OCI-LY7 (cell line): ENCODE measurements at regions of chr1 and their contacts with region 1.

Region 1: GRCh38 chr1:34859446-34860200 is at the start of gene SMIM12:
- DNase-seq: peak; percentile 94
- H3K4me3 ChIP-seq: peak within 1 kb of the TSS; percentile 95
- H3K27ac ChIP-seq: peak within 1 kb of the TSS; percentile 26
- H3K4me1 ChIP-seq: peaks cover 17% of the 10 kb centered on the region
- CTCF ChIP-seq: peak; percentile 87
- total RNA-seq, gene SMIM12: 36.3 and 44.3 TPM in 2 replicates

Region 2: GRCh38 chr1:34268311-34268954 is 591.2 kb before region 1 on chr1:
- CTCF ChIA-PET with region 1: no interaction called
- POLR2A ChIA-PET with region 1: no interaction called
- intact Hi-C with region 1: no loop called
- DNase-seq: no peak
- H3K4me3 ChIP-seq: no peak overlapping the region
- H3K27ac ChIP-seq: no peak overlapping the region
- H3K4me1 ChIP-seq: no peaks in the 10 kb centered on the region
- CTCF ChIP-seq: no peak

Region 3: DNA sequence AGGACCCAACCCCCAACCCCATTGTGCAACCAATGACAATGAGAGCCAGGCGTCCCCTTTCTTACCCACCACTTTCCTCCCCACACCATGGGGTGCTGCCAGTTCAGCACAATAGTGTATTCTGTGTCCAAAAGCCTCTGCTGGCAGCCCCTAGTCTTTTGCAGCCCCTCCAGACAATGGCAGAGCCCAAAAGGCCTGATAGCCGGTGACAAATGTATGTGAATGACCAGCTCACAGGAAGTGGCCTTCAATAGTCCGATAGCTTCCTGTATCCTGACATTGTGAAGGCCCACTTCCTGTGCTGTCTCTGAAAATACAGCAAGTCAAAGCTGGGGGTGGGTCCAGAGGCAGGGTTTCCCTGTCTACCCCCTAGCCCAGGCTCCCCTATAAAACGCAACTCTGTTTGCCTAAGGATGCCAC is 16.7 kb before region 1 on chr1:
- CTCF ChIA-PET with region 1: no interaction called
- POLR2A ChIA-PET with region 1: no interaction called
- intact Hi-C with region 1: no loop called
- DNase-seq: no peak
- H3K4me3 ChIP-seq: no peak overlapping the region
- H3K27ac ChIP-seq: no peak overlapping the region
- H3K4me1 ChIP-seq: no peaks in the 10 kb centered on the region
- CTCF ChIP-seq: no peak

Region 4: DNA sequence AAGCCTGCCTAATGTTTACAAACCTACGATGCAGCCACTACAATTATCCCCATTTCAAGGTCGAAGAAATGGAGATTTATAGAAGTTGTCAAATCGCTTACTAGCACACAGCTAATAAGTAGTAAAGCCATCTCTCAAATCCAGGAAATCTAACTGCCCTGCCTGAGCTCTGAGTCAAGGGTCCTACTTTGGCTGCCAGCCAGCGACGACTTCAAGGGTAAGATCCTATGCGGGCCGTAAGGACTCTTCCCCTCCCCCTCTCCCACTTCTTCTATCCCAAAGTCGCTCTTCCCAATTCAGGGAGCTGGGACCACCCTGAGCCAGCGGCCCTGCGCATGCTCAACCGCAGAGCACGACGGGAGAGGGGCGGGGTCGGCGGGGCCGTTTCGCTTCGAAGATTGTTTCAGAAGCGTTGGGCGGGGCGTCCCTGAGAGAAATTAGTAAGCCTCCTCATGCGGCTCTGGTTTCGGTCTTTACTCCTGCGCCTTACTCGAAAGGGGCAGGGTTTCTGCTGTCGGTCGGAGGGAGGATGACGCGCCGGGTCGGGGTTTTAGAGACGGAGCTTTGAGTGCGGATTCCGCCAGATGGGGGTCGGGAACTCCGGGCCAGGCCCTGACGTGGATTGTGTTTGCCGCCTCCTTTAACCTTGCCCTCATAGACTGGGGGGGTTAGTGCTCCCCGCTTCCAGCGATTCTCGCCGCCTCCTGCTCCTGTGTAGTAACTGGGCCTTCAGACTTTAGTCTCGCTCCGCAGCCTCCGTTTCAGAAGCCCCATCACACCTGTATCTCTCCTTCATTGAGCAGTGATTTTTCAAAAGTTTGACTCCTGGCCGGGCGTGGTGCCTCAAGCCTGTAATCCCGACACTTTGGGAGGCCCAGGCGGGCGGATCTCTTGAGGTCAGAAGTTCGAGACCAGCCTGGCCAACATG is 219.6 kb after region 1 on chr1 and contains the start of gene ZMYM1:
- CTCF ChIA-PET with region 1: no interaction called
- POLR2A ChIA-PET with region 1: no interaction called
- intact Hi-C with region 1: loop called (anchors 2 kb)
- DNase-seq: peak; percentile 87
- H3K4me3 ChIP-seq: peak within 1 kb of the TSS; percentile 79
- H3K27ac ChIP-seq: peak within 1 kb of the TSS; percentile 85
- H3K4me1 ChIP-seq: peaks cover 15% of the 10 kb centered on the region
- CTCF ChIP-seq: no peak
- total RNA-seq, gene ZMYM1: 6.1 and 6.9 TPM in 2 replicates

Region 5: GRCh38 chr1:35192853-35193664 is 333.4 kb after region 1 on chr1 and contains the start of gene SFPQ:
- CTCF ChIA-PET with region 1: no interaction called
- POLR2A ChIA-PET with region 1: interaction called, 3 read pairs
- intact Hi-C with region 1: loop called (anchors 5 kb)
- DNase-seq: peak; percentile 98
- H3K4me3 ChIP-seq: peak within 1 kb of the TSS; percentile 98
- H3K27ac ChIP-seq: peak within 1 kb of the TSS; percentile 81
- H3K4me1 ChIP-seq: peaks cover 29% of the 10 kb centered on the region
- CTCF ChIP-seq: no peak
- total RNA-seq, gene SFPQ: 395 and 569 TPM in 2 replicates

Region 6: GRCh38 chr1:35268282-35269200 is 408.9 kb after region 1 on chr1 and contains the start of gene ZMYM4:
- CTCF ChIA-PET with region 1: no interaction called
- POLR2A ChIA-PET with region 1: no interaction called
- intact Hi-C with region 1: loop called (anchors 10 kb)
- DNase-seq: peak; percentile 96
- H3K4me3 ChIP-seq: peak within 1 kb of the TSS; percentile 98
- H3K27ac ChIP-seq: peak within 1 kb of the TSS; percentile 65
- H3K4me1 ChIP-seq: peaks cover 21% of the 10 kb centered on the region
- CTCF ChIP-seq: no peak
- total RNA-seq, gene ZMYM4: 21.1 and 24.3 TPM in 2 replicates